Sigmoid colon (tissue), 7 donors: ENCODE measurements at regions of chr3 and their contacts with region 1.

Region 1: DNA sequence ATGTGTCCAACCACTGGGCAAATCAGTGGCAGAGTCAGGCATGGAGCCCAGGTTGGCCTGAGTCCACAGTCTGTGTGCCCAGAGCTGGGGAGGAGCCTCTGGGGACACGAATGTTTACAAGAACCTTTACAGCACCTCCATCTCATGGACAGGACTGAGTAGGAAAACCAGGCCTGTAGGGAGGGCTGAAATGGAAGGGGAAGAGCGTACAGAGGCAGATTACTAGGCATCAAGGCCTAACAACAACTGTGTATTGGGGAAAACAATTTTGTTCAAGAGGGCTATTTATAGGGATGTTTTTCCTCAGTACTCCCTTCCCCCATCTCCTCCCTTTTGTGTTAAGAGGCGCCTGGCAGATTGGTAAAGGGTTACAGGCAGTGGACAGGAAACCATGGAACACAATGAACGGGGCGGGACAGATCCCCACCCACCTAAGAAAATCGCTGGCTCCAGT is 15.1 kb upstream of the ARHGAP31 start:
- DNase-seq: peak; percentile 81
- H3K4me3 ChIP-seq: no peak overlapping the region
- H3K27ac ChIP-seq: peak overlapping the region; percentile 56 to 63 (median 62)
- H3K4me1 ChIP-seq: peaks cover 0 to 9% (median 8%) of the 10 kb centered on the region in 4 donors
- H3K27me3 ChIP-seq: no peaks in the 10 kb centered on the region
- CTCF ChIP-seq: no peak
- EP300 ChIP-seq: no peak
- POLR2A ChIP-seq: no peak

Region 2: DNA sequence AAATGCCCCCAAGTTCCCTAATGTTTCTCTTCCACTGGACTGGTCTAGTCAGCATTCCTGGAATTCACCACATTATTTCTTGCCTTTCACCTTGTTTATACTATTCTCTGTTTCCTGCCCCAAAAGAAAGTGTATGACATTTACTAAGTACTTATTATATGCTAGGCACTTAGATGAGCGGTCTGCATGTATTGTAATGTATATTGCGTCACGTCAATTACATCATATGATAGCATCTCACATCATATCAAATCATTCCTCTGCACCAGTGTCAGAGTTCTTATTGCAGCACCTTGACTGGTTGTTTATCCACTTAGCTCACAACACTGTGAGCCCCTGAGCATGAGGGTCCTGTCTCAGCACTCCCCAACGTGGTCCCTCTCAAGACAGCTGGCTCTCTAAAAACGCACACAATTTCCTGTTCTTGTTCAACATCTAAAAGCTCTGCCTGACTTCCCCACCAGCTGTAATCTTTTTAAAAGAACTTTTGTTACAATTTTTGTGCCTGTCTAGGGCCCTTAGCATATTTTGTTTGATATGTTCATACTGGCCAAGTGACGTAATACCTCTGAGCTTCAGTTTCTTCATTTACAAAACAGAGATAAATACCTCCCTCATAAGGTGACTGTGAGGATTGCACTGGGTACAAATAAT is 73.8 kb after region 1 on chr3:
- intact Hi-C with region 1: loop called (anchors 10 kb)
- DNase-seq: no peak
- H3K4me3 ChIP-seq: no peak overlapping the region
- H3K27ac ChIP-seq: peak overlapping the region in 2 of 4 donors; percentile 10 to 20
- H3K4me1 ChIP-seq: peaks cover 0 to 7% (median 2%) of the 10 kb centered on the region in 4 donors
- H3K27me3 ChIP-seq: no peaks in the 10 kb centered on the region
- CTCF ChIP-seq: peak in 1 of 4 experiments; percentile 21
- EP300 ChIP-seq: no peak
- POLR2A ChIP-seq: no peak

Region 3: GRCh38 chr3:119380697-119381096 is 101.6 kb after region 1 on chr3:
- intact Hi-C with region 1: loop called (anchors 10 kb)
- DNase-seq: no peak
- H3K4me3 ChIP-seq: no peak overlapping the region
- H3K27ac ChIP-seq: no peak overlapping the region
- H3K4me1 ChIP-seq: no peaks in the 10 kb centered on the region
- H3K27me3 ChIP-seq: no peaks in the 10 kb centered on the region
- CTCF ChIP-seq: no peak
- EP300 ChIP-seq: no peak
- POLR2A ChIP-seq: no peak

Region 4: GRCh38 chr3:120039642-120040610 is 760.8 kb after region 1 on chr3:
- intact Hi-C with region 1: no loop called
- DNase-seq: no peak
- H3K4me3 ChIP-seq: no peak overlapping the region
- H3K27ac ChIP-seq: no peak overlapping the region
- H3K4me1 ChIP-seq: peaks cover 0 to 5% (median 2%) of the 10 kb centered on the region in 4 donors
- H3K27me3 ChIP-seq: no peaks in the 10 kb centered on the region
- CTCF ChIP-seq: no peak
- EP300 ChIP-seq: no peak
- POLR2A ChIP-seq: no peak